Caki2 (cell line): ENCODE measurements at regions of chr1 and their contacts with region 1.

Region 1: DNA sequence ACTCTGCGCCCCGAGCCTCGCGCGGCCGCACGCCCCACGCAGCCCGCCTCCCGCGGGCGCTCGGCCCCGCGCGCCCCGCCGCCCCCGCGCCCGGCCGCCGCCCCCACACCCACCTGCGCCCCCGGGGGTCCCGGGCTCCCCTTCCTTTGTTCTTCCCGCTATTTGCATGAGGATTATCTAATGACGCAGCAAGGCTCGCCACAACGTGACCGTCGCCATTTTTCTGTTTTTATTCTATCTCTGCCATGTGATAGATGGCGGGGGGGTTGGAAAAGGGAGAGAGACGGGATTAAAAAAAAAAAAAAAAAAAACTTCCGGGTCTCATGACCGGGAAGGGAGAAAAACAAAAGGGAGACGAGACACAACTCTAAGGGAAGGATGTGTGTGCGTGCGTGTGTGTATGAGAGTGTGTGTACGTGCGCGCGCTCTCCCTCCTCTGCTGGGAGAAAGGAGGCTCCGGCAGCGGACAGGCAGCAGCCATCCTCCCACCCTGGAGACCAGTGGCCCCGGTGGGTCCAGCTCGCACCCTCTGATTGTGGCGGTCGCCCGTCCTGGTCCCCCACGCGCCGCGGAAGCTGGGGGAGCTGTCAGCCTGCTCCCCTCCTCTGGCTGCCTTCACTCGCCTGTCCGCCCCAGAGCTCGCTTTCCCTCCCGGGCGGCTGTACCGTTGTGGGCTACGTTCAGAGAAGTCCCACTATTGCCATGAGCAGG is 80.4 kb upstream of the AK4 start:
- DNase-seq: peak; percentile 93

Region 2: GRCh38 chr1:65009724-65010420 is 57.8 kb before region 1 on chr1:
- in situ Hi-C with region 1: no loop called
- DNase-seq: no peak

Region 3: GRCh38 chr1:65213271-65214023 is 145.8 kb after region 1 on chr1:
- in situ Hi-C with region 1: loop called (anchors 10 kb)
- DNase-seq: no peak